ENCODE measurements at regions of chr2 and their contacts with region 1.

Region 1: DNA sequence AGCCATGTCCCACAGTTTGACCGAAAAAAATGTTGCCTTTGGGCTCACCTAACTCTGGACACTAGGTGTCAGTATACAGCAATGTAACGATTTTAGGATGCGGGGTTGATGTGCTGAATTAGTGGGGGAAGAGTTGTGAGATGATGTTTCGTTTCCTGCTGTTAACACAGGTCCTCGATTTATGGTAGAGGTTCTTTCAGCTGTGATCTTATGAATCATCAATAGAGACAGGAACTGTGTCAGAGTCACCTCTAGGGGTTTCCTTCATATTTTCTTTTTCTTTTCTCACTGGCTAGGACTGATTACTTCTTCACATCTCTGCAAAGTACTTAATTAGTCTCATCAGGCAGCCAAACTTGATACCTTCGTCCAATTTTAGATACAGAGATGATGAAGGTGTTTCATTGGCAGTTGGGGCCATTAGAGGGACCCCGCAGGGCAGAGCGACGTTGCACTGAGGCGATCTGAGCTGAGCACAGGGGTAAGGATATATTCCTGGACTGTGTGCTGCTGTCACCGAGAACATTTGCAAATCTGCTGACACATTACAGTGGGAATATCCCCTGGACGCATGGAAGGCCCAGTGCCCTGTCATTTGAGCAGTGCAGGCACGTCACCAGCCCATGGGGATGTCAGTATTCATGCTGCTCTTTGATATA is 10.2 kb upstream of the MMADHC start:
- DNase-seq: peak; percentile 45
- CTCF ChIP-seq: peak; percentile 82

Region 2: GRCh38 chr2:149666809-149667320 is 69.1 kb after region 1 on chr2:
- in situ Hi-C with region 1: no loop called
- DNase-seq: no peak
- CTCF ChIP-seq: no peak

Region 3: GRCh38 chr2:150063432-150063889 is 465.7 kb after region 1 on chr2:
- in situ Hi-C with region 1: no loop called
- DNase-seq: no peak
- CTCF ChIP-seq: no peak

Region 4: DNA sequence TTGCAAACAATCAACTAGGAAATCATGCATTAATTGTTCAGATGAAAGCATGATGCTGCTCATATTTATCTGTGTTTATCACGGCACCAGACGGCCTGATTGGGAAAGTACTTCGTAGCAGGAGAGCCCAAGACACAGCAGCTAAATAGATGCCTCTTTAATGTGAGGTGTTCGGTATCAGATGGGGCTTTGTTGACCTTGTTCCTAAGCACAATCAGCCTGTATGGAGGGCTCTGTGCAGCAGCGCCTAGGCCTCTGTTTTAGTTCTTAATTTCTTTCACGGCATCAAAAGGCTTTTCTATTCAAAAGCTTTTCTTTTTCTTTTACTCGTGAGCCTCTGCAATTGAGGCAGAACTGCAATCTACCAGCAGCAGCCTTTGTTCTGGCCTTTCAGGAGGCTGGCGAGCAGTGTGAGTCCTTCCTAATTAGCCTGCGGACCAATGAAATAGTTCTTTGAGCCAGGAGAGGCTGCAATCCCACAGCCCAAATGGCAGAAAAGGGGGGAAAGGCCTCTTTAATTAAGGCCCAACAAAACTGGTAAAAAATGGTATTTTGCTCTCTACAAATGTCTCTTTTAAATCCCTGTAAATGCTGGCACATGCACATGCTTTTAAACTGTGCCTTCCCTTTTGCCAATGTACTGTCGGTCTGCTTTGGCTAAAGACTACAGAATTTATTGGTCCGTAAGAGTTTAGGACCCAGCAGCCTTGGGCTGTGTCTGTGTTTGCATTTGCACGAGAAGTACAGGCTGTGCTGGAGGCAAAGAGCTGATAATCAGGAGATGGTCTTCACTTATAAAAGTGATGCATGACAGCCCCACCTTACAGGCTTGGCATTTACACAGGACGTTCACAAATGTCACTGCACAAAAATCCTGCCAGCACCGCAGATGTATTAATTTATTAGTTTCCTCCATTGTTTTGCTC is 730.0 kb after region 1 on chr2:
- in situ Hi-C with region 1: no loop called
- DNase-seq: no peak
- CTCF ChIP-seq: no peak

Region 5: DNA sequence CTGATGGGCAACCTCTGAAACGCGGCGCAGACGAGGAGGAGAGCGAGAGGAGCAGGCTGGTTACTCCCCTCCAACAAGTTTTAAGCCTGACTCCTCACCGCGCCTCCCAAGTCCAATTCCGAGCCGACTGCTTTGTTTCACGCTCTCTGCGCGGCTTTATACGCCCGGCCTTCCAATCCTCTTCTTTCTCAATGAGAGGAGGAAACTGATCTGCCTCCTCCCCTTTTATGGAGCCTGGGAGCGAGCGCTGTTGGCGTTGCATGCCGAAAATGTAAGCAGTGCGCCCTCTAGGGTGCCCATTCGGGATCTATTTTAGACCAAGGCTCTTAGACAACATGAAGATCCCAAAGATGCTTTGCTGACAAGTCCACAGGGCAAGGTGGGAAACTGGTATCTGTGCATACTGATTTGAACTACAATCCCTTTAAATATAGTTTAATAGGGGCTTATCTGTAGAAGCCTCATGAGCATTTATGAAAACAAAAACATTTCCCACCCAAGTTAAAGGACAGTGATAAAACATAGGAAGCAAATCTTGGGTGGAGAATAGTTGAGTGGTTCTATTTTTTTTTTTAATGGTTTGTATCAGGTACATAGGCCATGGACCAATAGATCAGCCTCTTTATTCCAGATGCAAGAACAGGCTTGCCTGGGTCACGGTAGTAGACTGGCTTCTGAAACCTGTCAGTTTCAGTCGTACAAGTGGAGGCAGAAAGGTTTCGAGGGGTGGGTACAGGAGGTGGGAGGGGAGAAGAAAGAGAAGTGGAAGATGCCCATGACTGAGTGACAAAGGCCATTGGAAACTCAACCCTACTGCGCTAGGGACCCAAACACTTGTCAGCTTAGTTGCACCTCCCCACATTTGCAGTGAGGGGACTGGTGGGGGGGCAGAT is 890.0 kb after region 1 on chr2 and contains the start of gene RND3:
- in situ Hi-C with region 1: loop called (anchors 25 kb)
- DNase-seq: peak; percentile 75
- CTCF ChIP-seq: peak; percentile 72

Region 6: GRCh38 chr2:151032741-151033191 is 1435.0 kb after region 1 on chr2:
- in situ Hi-C with region 1: loop called (anchors 25 kb)
- DNase-seq: no peak
- CTCF ChIP-seq: no peak

Region 7: GRCh38 chr2:151241224-151241623 is 1643.4 kb after region 1 on chr2:
- in situ Hi-C with region 1: loop called (anchors 10 kb)
- DNase-seq: no peak
- CTCF ChIP-seq: no peak

Measured in GM13977 (cell line).